ENCODE measurements at regions of chr9 and their contacts with region 1.

Region 1: GRCh38 chr9:33458444-33458843 is 11.1 kb upstream of the AQP3 start:
- H3K4me3 ChIP-seq: no peak overlapping the region
- H3K27ac ChIP-seq: no peak overlapping the region
- H3K4me1 ChIP-seq: no peaks in the 10 kb centered on the region
- CTCF ChIP-seq: no peak

Region 2: DNA sequence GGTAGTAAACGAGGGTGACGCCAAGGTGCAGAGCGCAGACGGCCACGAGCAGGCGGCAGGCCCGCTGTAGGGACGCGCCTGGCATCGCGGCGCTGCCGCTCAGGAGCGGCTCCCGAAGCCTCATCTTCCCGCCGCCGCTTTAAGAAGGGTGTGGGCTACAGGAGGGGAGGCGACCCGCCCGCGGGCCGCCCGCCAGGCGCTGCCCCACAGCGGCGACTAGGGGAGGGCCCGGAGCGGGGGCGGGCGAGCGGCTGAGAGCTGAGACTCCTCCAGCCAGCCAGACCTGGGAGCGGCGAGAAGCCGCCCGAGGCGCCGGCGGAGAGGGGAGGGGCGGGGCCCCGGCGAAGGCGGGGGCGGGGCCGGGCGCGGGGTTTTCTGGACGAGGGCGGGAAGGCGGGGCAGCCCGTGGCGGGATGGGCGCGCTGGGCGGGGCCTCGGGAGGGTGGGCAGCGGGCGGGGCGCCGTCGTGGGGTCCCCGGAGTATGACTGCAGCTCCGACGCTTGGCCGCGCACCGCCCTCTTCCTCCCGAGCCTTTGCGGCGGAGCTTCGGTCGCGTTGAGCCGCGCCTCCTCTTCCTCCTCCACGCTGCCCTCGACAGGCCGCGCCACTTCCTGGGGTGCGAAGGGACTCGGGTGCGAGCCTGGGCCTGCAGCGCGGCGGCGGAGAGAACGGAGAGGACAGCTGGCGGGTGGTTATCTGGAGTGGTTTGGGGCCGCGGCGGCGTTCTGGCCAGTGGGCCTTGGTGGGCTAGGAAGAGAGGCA is 291.2 kb before region 1 on chr9 and contains the start of gene B4GALT1:
- CTCF ChIA-PET with region 1: no interaction called
- POLR2A ChIA-PET with region 1: no interaction called
- H3K4me3 ChIP-seq: peak within 1 kb of the TSS; percentile 82
- H3K27ac ChIP-seq: peak within 1 kb of the TSS; percentile 88
- H3K4me1 ChIP-seq: peaks cover 12% of the 10 kb centered on the region; the same call in 1 of the 2 replicates
- CTCF ChIP-seq: peak; percentile 8

Region 3: DNA sequence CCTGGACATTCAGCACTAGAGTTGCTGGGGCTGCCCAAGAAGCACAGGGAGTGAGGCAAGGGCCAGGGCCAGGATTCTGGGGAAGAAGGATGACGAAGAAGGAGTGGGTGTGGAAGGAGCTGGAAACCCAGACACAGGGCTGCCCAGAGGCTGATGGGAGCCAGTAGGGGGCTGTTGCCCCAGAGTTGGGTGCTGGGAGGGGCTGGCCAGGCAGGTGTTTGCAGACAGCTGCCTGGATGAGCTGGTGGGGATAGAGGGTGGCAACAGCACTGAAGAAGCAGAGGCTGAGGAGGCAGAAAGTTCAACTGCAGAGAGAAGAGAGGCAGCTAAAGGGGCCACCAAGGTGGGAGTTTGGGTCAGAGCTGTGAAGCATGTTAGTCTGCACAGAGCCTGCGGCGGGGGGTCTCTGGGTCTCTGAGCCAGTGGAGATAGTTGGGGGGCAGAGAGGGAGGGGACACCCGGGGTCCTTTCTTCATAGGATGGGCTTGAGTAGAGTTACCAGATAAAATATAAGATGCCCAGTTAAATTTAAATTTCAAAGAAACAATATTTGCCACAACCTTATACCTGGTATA is 53.6 kb before region 1 on chr9:
- CTCF ChIA-PET with region 1: interaction called, 66 read pairs
- POLR2A ChIA-PET with region 1: interaction called, 3 read pairs
- H3K4me3 ChIP-seq: no peak overlapping the region
- H3K27ac ChIP-seq: no peak overlapping the region
- H3K4me1 ChIP-seq: no peaks in the 10 kb centered on the region
- CTCF ChIP-seq: no peak

Region 4: DNA sequence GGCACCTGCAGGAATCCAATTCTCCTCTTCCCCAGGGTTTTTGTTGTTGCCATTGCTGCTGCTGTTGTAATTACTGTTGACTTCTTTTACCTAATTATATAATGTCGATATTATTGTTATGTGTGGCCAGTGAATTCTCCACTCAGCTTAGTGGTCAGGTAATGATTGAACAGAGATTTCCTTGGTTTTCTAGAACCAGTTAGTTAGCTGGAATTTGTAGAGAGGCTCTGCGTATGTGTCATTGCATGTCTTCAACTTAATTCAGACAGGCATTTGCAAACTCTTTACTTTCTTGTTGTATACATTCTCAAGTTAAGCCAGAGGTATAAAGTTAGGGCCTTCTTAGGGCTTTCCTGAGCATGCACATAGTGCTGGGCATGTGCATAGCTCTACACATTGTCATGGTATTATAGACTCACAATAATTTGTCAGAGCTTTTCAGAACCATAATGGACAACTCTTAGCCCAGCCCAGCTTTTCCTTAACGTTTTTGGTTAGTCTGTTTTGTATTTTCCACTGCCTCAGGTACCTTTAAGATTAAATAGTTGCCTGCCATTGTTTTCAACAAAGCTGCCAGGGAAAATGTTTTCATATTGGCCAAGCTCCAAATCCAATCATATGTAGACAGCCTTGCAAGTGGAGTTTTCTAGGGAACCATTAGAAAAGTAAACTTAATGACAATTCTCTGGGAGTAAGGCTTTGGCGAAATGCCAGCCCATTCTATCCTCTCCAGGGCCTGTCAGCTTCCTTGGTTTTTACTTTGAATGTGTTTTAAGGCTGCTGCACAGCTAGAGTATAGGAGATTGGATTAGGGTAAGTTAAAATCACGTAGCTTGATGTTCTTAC is 426.6 kb after region 1 on chr9:
- CTCF ChIA-PET with region 1: no interaction called
- POLR2A ChIA-PET with region 1: no interaction called
- H3K4me3 ChIP-seq: no peak overlapping the region
- H3K27ac ChIP-seq: peak overlapping the region; percentile 25; the same call in 1 of the 2 replicates
- H3K4me1 ChIP-seq: peaks cover 8% of the 10 kb centered on the region
- CTCF ChIP-seq: no peak